Activated CD8-positive, alpha-beta T cell treated with anti-CD3 and anti-CD28 coated beads for 36 hours (primary cell): ENCODE measurements at regions of chr19 and their contacts with region 1.

Region 1: GRCh38 chr19:18571564-18572300 is at the start of gene UBA52:
- DNase-seq: peak; percentile 99
- ATAC-seq: peak; percentile 92
- H3K4me3 Mint-ChIP-seq: peak within 1 kb of the TSS; percentile 87
- H3K27ac Mint-ChIP-seq: peak within 1 kb of the TSS; percentile 91
- H3K4me1 Mint-ChIP-seq: peaks cover 29% of the 10 kb centered on the region
- H3K27me3 Mint-ChIP-seq: no peaks in the 10 kb centered on the region
- CTCF ChIP-seq: no peak
- total RNA-seq, gene UBA52: 1,795 to 1,837 TPM

Region 2: DNA sequence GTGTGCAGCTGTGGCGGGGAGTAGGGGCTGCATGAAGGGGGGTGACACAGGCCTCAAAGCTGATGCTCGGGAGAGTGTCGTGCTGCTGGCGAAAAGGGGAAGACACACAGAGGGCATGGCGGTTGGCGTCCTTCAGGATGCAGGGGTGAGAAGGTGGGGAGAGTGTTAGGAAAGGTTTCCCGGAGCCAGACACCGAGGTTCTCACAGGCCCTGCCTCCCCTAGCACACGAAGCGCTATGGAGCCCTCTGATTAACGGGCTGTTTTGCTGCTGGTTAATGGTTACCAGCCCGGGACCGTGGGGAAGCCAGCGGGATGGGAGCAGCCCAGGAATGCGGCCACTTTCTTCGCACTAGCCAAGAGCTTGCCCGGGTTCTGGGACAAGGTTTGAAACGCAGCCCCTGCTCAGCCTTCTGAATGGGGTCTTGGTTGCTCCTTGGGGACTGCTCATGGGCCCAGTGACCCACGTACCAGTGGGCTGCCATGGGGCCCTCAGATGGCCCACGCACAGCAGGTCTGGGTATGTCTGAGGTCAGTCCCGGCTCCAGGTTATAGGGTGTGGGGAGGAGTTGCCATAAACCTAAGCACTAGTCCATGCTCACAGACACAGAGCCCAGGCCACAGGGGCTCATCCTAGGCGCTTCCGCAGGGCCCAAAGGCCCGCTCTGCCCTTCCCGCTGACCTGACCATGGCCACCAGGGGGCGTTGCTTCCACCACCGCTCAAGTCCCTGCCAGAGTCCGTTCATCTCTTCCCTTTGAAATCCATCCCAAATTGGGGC is 102.5 kb before region 1 on chr19:
- CTCF ChIA-PET with region 1: interaction called, 5 read pairs
- POLR2A ChIA-PET with region 1: no interaction called
- intact Hi-C with region 1: loop called (anchors 10 kb)
- DNase-seq: peak; percentile 77
- ATAC-seq: peak; percentile 56
- H3K4me3 Mint-ChIP-seq: no peak overlapping the region
- H3K27ac Mint-ChIP-seq: no peak overlapping the region
- H3K4me1 Mint-ChIP-seq: peaks cover 28% of the 10 kb centered on the region
- H3K27me3 Mint-ChIP-seq: no peaks in the 10 kb centered on the region
- CTCF ChIP-seq: no peak

Region 3: GRCh38 chr19:18532168-18532890 is 39.4 kb before region 1 on chr19:
- CTCF ChIA-PET with region 1: no interaction called
- POLR2A ChIA-PET with region 1: no interaction called
- intact Hi-C with region 1: no loop called
- DNase-seq: no peak
- ATAC-seq: no peak
- H3K4me3 Mint-ChIP-seq: no peak overlapping the region
- H3K27ac Mint-ChIP-seq: no peak overlapping the region
- H3K4me1 Mint-ChIP-seq: no peaks in the 10 kb centered on the region
- H3K27me3 Mint-ChIP-seq: no peaks in the 10 kb centered on the region
- CTCF ChIP-seq: no peak

Region 4: GRCh38 chr19:18542936-18543815 is 28.6 kb before region 1 on chr19 and contains the start of gene FKBP8:
- CTCF ChIA-PET with region 1: interaction called, 9 read pairs
- POLR2A ChIA-PET with region 1: interaction called, 25 read pairs
- intact Hi-C with region 1: no loop called
- DNase-seq: peak; percentile 97
- ATAC-seq: peak; percentile 96
- H3K4me3 Mint-ChIP-seq: peak within 1 kb of the TSS; percentile 90
- H3K27ac Mint-ChIP-seq: peak within 1 kb of the TSS; percentile 98
- H3K4me1 Mint-ChIP-seq: peaks cover 22% of the 10 kb centered on the region
- H3K27me3 Mint-ChIP-seq: no peaks in the 10 kb centered on the region
- CTCF ChIP-seq: no peak
- total RNA-seq, gene FKBP8: 216 to 220 TPM

Region 5: GRCh38 chr19:18557474-18558201 is 14.1 kb before region 1 on chr19 and contains the start of gene KXD1:
- CTCF ChIA-PET with region 1: interaction called, 9 read pairs
- POLR2A ChIA-PET with region 1: interaction called, 21 read pairs
- intact Hi-C with region 1: no loop called
- DNase-seq: peak; percentile 99
- ATAC-seq: peak; percentile 99
- H3K4me3 Mint-ChIP-seq: peak within 1 kb of the TSS; percentile 90
- H3K27ac Mint-ChIP-seq: peak within 1 kb of the TSS; percentile 95
- H3K4me1 Mint-ChIP-seq: peaks cover 15% of the 10 kb centered on the region
- H3K27me3 Mint-ChIP-seq: no peaks in the 10 kb centered on the region
- CTCF ChIP-seq: no peak
- total RNA-seq, gene KXD1: 137 to 142 TPM

Region 6: DNA sequence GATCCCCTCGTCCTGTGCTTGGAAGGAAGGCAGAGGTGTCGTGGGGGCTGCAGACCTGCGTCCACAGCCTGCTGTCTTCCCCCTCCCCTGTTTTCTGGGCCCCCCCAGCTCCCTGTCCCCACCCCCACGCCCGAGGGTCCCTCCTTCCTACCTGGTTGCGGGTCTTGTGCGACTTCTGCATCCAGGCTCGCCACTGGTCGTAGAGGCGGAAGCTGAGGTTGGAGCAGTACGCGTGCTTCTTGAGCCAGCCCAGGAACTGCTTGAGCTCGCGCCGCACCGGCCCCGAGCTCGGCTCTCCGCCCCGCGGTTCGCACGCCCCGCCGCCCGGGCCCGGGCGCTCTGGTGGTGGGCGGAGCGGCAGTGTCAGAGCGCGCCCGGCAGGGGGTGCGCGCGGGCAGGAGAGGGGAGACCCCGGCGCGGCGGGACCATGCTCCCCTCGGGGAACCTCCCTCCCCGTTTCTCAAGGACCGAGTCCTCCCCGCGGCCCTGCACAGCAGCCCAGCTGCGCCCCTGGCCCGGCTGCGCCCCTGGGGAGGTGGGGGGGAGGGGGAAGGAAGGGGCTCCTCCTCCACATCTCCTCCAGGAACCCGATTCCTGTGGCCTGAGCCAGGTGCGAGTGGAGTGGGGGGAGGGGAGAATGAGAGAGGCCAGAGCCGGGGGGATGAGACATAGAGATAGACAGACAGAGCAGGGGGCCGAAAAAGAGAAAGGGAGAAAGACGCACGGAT is 22.5 kb after region 1 on chr19:
- CTCF ChIA-PET with region 1: interaction called, 37 read pairs
- POLR2A ChIA-PET with region 1: interaction called, 51 read pairs
- intact Hi-C with region 1: no loop called
- DNase-seq: peak; percentile 79
- ATAC-seq: peak; percentile 80
- H3K4me3 Mint-ChIP-seq: peak overlapping the region; percentile 67
- H3K27ac Mint-ChIP-seq: peak overlapping the region; percentile 41
- H3K4me1 Mint-ChIP-seq: peaks cover 31% of the 10 kb centered on the region
- H3K27me3 Mint-ChIP-seq: peaks cover 3% of the 10 kb centered on the region
- CTCF ChIP-seq: peak; percentile 93

Region 7: DNA sequence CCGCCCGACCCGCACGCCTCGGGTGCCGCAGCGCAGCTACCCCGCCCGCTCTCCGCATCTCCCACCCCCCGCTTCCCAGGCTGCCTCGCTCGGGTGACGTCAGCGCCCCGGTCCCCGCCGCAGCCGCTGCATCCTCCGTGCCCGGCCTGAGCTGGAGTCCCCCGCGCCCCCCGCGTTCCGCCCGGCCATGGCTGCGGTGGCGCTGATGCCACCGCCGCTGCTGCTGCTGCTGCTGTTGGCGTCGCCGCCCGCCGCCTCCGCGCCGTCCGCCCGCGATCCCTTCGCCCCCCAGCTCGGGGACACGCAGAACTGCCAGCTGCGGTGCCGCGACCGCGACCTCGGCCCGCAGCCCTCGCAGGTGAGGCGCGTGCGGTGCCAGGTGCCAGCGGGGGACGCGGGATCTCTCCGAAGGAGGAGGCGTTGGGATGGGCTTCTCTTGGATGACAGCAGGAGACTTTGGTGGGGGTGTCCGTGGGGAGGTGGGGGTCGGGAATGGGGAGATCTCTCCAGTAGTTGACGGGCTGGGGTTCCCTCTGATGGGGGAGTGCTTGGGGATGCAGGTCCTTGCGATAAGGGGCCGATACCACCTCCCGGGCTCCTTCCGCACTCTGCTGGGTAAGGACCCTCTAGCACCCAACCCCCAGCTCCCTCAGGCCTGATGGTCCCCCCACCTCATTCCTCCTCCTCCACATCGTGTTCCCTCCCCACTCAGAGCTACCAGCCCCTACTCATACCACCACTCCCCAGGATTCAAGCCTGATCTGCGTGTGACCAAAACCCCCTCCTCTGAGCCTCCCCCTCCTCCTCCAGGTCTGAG is 41.2 kb after region 1 on chr19 and contains the start of gene TMEM59L:
- CTCF ChIA-PET with region 1: no interaction called
- POLR2A ChIA-PET with region 1: no interaction called
- intact Hi-C with region 1: no loop called
- DNase-seq: peak; percentile 45
- ATAC-seq: peak; percentile 34
- H3K4me3 Mint-ChIP-seq: peak within 1 kb of the TSS; percentile 57
- H3K27ac Mint-ChIP-seq: no peak within 1 kb of the TSS
- H3K4me1 Mint-ChIP-seq: peaks cover 17% of the 10 kb centered on the region
- H3K27me3 Mint-ChIP-seq: peaks cover 67% of the 10 kb centered on the region
- CTCF ChIP-seq: no peak
- total RNA-seq, gene TMEM59L: not detected

Region 8: DNA sequence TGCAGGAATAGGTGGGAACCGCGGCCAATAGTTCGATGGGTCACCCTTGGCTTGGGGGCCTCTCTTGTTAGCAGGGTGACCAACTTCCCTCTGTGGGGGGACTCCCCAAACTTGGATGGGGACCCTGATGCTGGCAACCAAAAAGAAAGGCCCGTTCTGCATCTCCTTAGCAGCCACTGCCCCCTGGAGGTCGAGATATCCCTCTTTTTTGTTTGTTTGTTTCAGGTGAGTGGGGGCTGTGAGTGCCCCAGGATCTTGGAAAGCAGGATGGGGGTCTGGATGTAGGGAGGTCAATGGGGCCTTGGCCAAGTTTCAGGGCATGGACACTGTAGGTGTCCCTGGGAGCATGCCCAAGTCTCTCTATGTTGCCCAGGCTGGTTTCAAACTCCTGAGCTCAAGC is 104.0 kb after region 1 on chr19:
- CTCF ChIA-PET with region 1: no interaction called
- POLR2A ChIA-PET with region 1: no interaction called
- intact Hi-C with region 1: no loop called
- DNase-seq: peak; percentile 50
- ATAC-seq: no peak
- H3K4me3 Mint-ChIP-seq: no peak overlapping the region
- H3K27ac Mint-ChIP-seq: no peak overlapping the region
- H3K4me1 Mint-ChIP-seq: peaks cover 1% of the 10 kb centered on the region
- H3K27me3 Mint-ChIP-seq: no peaks in the 10 kb centered on the region
- CTCF ChIP-seq: peak; percentile 32